ENCODE measurements at regions of chr3 and their contacts with region 1.

Region 1: GRCh38 chr3:14261229-14261628 is 82.6 kb downstream of the LSM3 start:
- DNase-seq: peak; percentile 76 to 92 (median 86)
- H3K4me3 ChIP-seq: no peak overlapping the region
- H3K27ac ChIP-seq: no peak overlapping the region
- H3K27me3 ChIP-seq: no peaks in the 10 kb centered on the region
- CTCF ChIP-seq: peak; percentile 88 to 99 (median 97)

Region 2: DNA sequence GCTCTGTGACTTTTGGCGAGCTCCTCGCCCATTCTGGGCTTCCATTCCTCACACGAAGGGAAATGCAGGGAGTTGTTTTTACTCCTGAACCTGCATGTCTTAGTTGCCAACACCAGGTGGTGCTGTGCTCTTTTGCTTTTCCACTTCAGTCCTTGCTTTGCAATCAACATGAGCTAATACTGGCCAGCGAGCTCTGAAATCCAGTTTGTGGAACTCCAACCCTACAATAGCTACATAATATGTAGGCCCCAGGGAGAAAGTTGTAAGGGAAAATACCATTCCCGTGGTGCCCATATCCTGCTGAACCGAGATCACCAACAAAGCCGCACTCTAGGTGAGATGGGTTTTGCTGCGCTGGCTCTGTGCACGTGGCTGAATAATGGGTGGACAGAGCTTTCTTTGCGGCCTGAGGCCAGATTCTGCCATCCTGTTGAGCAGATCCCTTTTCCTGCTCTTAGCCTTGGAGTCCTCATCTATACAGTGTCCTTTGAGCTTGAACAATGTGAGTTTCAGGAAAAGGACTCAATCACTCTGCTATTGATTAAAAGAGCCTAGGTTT is 57.6 kb before region 1 on chr3:
- intact Hi-C with region 1: loop called (anchors 2 to 10 kb)
- DNase-seq: peak in 9 of 10 donors; percentile 58 to 84 (median 72)
- H3K4me3 ChIP-seq: no peak overlapping the region
- H3K27ac ChIP-seq: peak overlapping the region in 15 of 59 donors; percentile 6 to 66 (median 31)
- H3K27me3 ChIP-seq: no peaks in the 10 kb centered on the region
- CTCF ChIP-seq: peak; percentile 79 to 97 (median 91)

Region 3: DNA sequence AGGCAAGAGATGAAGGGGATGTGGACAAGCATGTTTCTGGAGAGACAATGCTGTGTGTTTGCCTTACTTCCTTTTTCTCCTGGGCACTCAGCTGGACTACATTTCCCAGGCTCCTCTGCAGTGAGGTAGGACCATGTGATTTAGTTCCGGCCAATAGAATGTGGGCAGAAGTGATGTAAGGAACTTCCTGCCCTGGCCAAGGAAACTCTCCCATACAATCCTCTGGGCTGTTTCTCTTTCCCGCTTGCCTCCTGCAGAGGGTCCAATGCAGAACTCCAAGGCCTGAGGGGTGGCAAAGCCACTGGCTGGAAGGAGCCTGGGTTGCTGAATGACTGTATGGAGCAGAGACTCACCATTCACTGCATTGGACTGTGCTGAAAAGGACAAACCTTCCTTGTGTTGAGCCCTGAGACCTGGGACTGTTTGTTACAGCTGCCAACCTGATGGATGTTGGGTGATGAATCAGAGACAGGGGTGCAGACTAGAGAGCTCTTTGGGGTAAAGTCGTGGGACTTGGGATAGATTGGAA is 58.5 kb after region 1 on chr3:
- intact Hi-C with region 1: no loop called
- DNase-seq: no peak
- H3K4me3 ChIP-seq: no peak overlapping the region
- H3K27ac ChIP-seq: no peak overlapping the region
- H3K27me3 ChIP-seq: peaks cover 0 to 21% (median 0%) of the 10 kb centered on the region in 45 donors
- CTCF ChIP-seq: no peak

Measured in dorsolateral prefrontal cortex (tissue), 120 donors.